HCT116 (cell line): ENCODE measurements at regions of chr2 and their contacts with region 1.

Region 1: GRCh38 chr2:152175458-152176325 is at the start of gene STAM2:
- DNase-seq: peak; percentile 79
- ATAC-seq: peak; percentile 87
- H3K4me3 ChIP-seq: peak within 1 kb of the TSS; percentile 91 to 93
- H3K27ac ChIP-seq: peak within 1 kb of the TSS; percentile 72
- H3K4me1 ChIP-seq: peaks cover 0 to 16% of the 10 kb centered on the region in 2 experiments; a peak in 3 of 4 replicates
- H3K27me3 ChIP-seq: no peaks in the 10 kb centered on the region
- CTCF ChIP-seq: peak; percentile 82 to 95 (median 93)
- POLR2A ChIP-seq: peak; percentile 38
- RAD21 ChIP-seq: peak; percentile 96
- total RNA-seq, gene STAM2: 19.2 TPM

Region 2: DNA sequence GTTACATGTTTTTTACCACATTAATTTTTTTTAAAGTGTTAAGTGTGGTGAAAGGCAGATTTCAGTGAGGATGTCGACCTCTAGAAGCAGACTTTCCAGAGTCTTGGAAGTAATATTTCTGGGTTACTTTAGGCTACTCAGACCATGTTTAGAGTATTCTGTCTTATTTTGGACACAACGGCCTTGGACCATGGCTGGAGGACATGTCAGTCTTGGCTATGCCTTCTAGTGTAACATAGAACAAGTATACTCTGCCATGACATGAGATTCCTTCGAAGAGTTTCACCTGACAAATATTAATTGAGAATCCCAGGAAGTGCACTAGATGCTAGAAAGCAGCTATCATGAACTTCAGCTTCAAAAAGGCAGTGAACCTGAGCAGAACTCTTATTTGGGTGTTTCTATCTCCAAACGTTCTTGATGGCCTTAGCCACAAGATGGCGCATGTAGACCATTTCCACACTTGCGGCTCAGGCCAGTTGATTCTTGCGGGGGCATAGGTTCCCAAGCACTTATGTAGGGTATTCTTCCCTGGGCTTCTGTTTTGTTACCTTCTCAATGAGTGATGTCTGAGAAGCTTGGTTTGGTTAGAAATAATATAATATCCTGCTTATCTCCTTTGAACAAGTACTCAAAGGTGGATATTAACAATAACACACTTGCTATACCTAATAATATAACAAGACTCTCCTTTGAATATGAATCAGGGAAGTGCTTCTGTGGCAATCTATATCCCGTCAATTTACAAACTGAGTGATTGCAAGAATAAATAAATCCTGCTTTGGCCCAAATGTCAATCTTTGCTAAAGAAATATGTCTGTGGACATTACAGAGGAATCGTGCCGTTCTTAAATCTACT is 138.9 kb before region 1 on chr2:
- CTCF ChIA-PET with region 1: interaction called, 3 read pairs
- POLR2A ChIA-PET with region 1: no interaction called
- RAD21 ChIA-PET with region 1: no interaction called
- intact Hi-C with region 1: loop called (anchors 2 kb)
- DNase-seq: peak; percentile 61
- ATAC-seq: peak; percentile 94
- H3K4me3 ChIP-seq: no peak overlapping the region
- H3K27ac ChIP-seq: no peak overlapping the region
- H3K4me1 ChIP-seq: no peaks in the 10 kb centered on the region
- H3K27me3 ChIP-seq: no peaks in the 10 kb centered on the region
- CTCF ChIP-seq: peak; percentile 79 to 90 (median 79)
- POLR2A ChIP-seq: no peak
- RAD21 ChIP-seq: peak; percentile 93

Region 3: DNA sequence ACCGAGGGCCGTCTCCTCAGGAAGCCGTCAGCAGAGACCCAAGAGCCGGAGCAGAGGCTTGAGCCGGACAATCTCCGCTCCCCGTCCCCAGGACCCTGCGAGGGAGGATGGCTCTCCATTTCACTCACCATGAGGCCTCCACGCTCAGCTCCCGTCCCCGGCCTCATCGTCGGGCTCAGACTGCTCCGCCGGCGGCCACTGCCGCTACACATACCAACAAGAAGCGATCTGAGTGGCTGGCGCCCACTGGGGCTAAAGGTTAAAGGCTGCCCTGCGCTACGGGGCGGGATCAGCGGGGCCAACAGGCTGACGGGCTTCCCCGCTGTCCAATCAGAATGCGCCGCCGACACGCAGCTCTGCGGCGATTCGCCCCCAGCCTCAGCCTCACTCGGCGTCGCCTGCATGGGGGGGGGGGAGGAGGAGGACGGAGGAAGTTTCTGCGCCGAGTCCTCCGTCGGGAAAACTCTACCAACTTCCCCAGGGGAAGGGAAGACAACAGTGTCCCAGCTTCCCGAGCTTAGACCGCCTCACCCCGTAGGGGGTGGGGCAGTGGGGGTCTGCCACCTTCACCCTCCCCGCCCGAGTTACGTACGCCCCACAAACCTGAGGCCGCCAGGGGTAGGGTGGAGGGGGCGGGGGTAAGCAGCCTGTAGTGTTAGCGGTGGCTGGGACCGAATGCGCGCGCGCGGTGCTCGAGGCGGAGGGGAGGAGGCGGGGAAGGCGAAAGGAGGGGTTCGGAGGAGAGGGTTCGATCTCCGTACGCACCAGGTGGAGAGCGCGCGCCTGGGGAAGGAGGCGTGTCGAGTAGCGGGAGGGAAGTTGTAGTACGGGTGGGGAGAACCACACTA is 541.8 kb after region 1 on chr2 and contains the start of gene PRPF40A:
- CTCF ChIA-PET with region 1: no interaction called
- POLR2A ChIA-PET with region 1: no interaction called
- RAD21 ChIA-PET with region 1: no interaction called
- intact Hi-C with region 1: loop called (anchors 2 kb)
- DNase-seq: peak; percentile 94
- ATAC-seq: peak; percentile 80
- H3K4me3 ChIP-seq: peak within 1 kb of the TSS; percentile 70 to 95
- H3K27ac ChIP-seq: peak within 1 kb of the TSS; percentile 89
- H3K4me1 ChIP-seq: peaks cover 3 to 18% of the 10 kb centered on the region in 2 experiments; a peak in 3 of 4 replicates
- H3K27me3 ChIP-seq: no peaks in the 10 kb centered on the region
- CTCF ChIP-seq: no peak
- POLR2A ChIP-seq: peak; percentile 62
- RAD21 ChIP-seq: no peak
- total RNA-seq, gene PRPF40A: 171 TPM